Caco-2 (cell line): ENCODE measurements at regions of chr18 and their contacts with region 1.

Region 1: DNA sequence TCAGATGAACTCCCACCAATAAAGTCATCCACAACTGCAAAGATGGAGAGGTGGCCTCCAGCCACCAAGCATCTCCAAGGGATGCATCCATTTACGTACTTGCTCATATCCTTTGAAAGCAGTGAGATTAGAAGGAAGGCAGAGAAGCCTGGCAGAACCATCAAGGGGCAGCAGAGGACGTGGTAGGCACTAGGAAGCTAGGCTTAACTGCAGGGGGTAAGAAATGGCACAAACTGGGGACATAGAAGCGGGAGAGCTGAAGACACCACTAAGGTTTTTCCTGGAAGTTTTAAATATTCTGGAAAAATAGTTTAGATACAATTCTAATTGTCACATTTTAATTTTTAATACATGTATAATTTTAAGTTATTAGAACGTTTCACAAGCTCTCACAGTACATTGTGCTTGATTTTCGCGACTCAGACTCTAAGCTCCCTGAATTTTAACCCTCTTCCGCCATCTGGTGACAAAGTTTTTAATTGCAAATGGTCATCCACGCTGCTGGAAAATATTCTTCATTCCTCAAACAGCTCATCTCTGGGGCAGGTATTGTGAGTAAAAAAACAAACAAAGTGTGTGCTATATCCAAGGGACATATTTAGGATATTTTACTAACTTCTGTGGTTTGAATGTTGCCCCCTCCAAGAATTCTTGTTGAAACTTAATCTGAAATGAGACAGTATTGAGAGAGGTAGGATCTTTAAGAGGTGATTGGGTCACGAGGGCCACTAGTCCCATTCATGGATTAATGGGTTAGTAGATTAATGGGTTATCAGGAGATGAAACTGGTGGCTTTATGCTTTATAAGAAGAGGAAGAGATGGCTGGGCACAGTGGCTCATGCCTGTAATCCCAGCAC is 1.6 kb upstream of the PSTPIP2 start:
- DNase-seq: peak in 1 of 2 experiments; percentile 72
- H3K4me3 ChIP-seq: no peak overlapping the region
- H3K4me3 Mint-ChIP-seq: no peak overlapping the region
- H3K27ac Mint-ChIP-seq: peak overlapping the region; percentile 73
- H3K4me1 ChIP-seq: 0 out of 2 replicates have a peak, but pooled peaks cover 3% of the 10 kb centered on the region
- H3K4me1 Mint-ChIP-seq: peaks cover 8% of the 10 kb centered on the region
- H3K27me3 ChIP-seq: no peaks in the 10 kb centered on the region
- H3K27me3 Mint-ChIP-seq: no peaks in the 10 kb centered on the region
- CTCF ChIP-seq: peak in 1 of 2 experiments; percentile 17

Region 2: GRCh38 chr18:45664824-45665763 is 408.6 kb before region 1 on chr18:
- CTCF ChIA-PET with region 1: no interaction called
- POLR2A ChIA-PET with region 1: no interaction called
- intact Hi-C with region 1: loop called (anchors 5 kb)
- DNase-seq: peak in 1 of 2 experiments; percentile 49
- H3K4me3 ChIP-seq: no peak overlapping the region
- H3K4me3 Mint-ChIP-seq: no peak overlapping the region
- H3K27ac Mint-ChIP-seq: no peak overlapping the region
- H3K4me1 ChIP-seq: no peaks in the 10 kb centered on the region
- H3K4me1 Mint-ChIP-seq: peaks cover 6% of the 10 kb centered on the region
- H3K27me3 ChIP-seq: no peaks in the 10 kb centered on the region
- H3K27me3 Mint-ChIP-seq: no peaks in the 10 kb centered on the region
- CTCF ChIP-seq: peak; percentile 61 to 63

Region 3: GRCh38 chr18:45890606-45891005 is 183.1 kb before region 1 on chr18:
- CTCF ChIA-PET with region 1: no interaction called
- POLR2A ChIA-PET with region 1: no interaction called
- intact Hi-C with region 1: no loop called
- DNase-seq: no peak
- H3K4me3 ChIP-seq: no peak overlapping the region
- H3K4me3 Mint-ChIP-seq: no peak overlapping the region
- H3K27ac Mint-ChIP-seq: no peak overlapping the region
- H3K4me1 ChIP-seq: no peaks in the 10 kb centered on the region
- H3K4me1 Mint-ChIP-seq: no peaks in the 10 kb centered on the region
- H3K27me3 ChIP-seq: no peaks in the 10 kb centered on the region
- H3K27me3 Mint-ChIP-seq: no peaks in the 10 kb centered on the region
- CTCF ChIP-seq: no peak

Region 4: GRCh38 chr18:45920367-45920766 is 153.3 kb before region 1 on chr18:
- CTCF ChIA-PET with region 1: interaction called, 11 read pairs
- POLR2A ChIA-PET with region 1: no interaction called
- intact Hi-C with region 1: loop called (anchors 5 kb)
- DNase-seq: no peak
- H3K4me3 ChIP-seq: no peak overlapping the region
- H3K4me3 Mint-ChIP-seq: no peak overlapping the region
- H3K27ac Mint-ChIP-seq: no peak overlapping the region
- H3K4me1 ChIP-seq: no peaks in the 10 kb centered on the region
- H3K4me1 Mint-ChIP-seq: no peaks in the 10 kb centered on the region
- H3K27me3 ChIP-seq: no peaks in the 10 kb centered on the region
- H3K27me3 Mint-ChIP-seq: no peaks in the 10 kb centered on the region
- CTCF ChIP-seq: no peak

Region 5: GRCh38 chr18:45926085-45926484 is 147.6 kb before region 1 on chr18:
- CTCF ChIA-PET with region 1: interaction called, 11 read pairs
- POLR2A ChIA-PET with region 1: no interaction called
- intact Hi-C with region 1: loop called (anchors 5 kb)
- DNase-seq: no peak
- H3K4me3 ChIP-seq: no peak overlapping the region
- H3K4me3 Mint-ChIP-seq: no peak overlapping the region
- H3K27ac Mint-ChIP-seq: no peak overlapping the region
- H3K4me1 ChIP-seq: no peaks in the 10 kb centered on the region
- H3K4me1 Mint-ChIP-seq: no peaks in the 10 kb centered on the region
- H3K27me3 ChIP-seq: no peaks in the 10 kb centered on the region
- H3K27me3 Mint-ChIP-seq: no peaks in the 10 kb centered on the region
- CTCF ChIP-seq: no peak

Region 6: GRCh38 chr18:45967007-45967706 is 106.5 kb before region 1 on chr18 and contains the start of gene EPG5:
- CTCF ChIA-PET with region 1: no interaction called
- POLR2A ChIA-PET with region 1: no interaction called
- intact Hi-C with region 1: loop called (anchors 1 kb)
- DNase-seq: peak; percentile 93 to 94
- H3K4me3 ChIP-seq: peak within 1 kb of the TSS; percentile 69
- H3K4me3 Mint-ChIP-seq: peak within 1 kb of the TSS; percentile 99
- H3K27ac Mint-ChIP-seq: peak within 1 kb of the TSS; percentile 92
- H3K4me1 ChIP-seq: no peaks in the 10 kb centered on the region
- H3K4me1 Mint-ChIP-seq: no peaks in the 10 kb centered on the region
- H3K27me3 ChIP-seq: no peaks in the 10 kb centered on the region
- H3K27me3 Mint-ChIP-seq: no peaks in the 10 kb centered on the region
- CTCF ChIP-seq: no peak
- total RNA-seq, gene EPG5: 10.6 and 12.0 TPM in 2 replicates

Region 7: GRCh38 chr18:45980229-45980628 is 93.5 kb before region 1 on chr18:
- CTCF ChIA-PET with region 1: no interaction called
- POLR2A ChIA-PET with region 1: no interaction called
- intact Hi-C with region 1: loop called (anchors 2 kb)
- DNase-seq: peak; percentile 41 to 54
- H3K4me3 ChIP-seq: no peak overlapping the region
- H3K4me3 Mint-ChIP-seq: no peak overlapping the region
- H3K27ac Mint-ChIP-seq: no peak overlapping the region
- H3K4me1 ChIP-seq: peaks cover 14% of the 10 kb centered on the region
- H3K4me1 Mint-ChIP-seq: no peaks in the 10 kb centered on the region
- H3K27me3 ChIP-seq: no peaks in the 10 kb centered on the region
- H3K27me3 Mint-ChIP-seq: no peaks in the 10 kb centered on the region
- CTCF ChIP-seq: no peak

Region 8: GRCh38 chr18:46051731-46052461 is 21.8 kb before region 1 on chr18:
- CTCF ChIA-PET with region 1: no interaction called
- POLR2A ChIA-PET with region 1: interaction called, 3 read pairs
- intact Hi-C with region 1: loop called (anchors 1 kb)
- DNase-seq: peak; percentile 64 to 72
- H3K4me3 ChIP-seq: no peak overlapping the region
- H3K4me3 Mint-ChIP-seq: peak overlapping the region; percentile 27
- H3K27ac Mint-ChIP-seq: no peak overlapping the region
- H3K4me1 ChIP-seq: peaks cover 16% of the 10 kb centered on the region
- H3K4me1 Mint-ChIP-seq: peaks cover 18% of the 10 kb centered on the region
- H3K27me3 ChIP-seq: no peaks in the 10 kb centered on the region
- H3K27me3 Mint-ChIP-seq: no peaks in the 10 kb centered on the region
- CTCF ChIP-seq: no peak

Region 9: GRCh38 chr18:46226461-46226860 is 152.8 kb after region 1 on chr18:
- CTCF ChIA-PET with region 1: no interaction called
- POLR2A ChIA-PET with region 1: no interaction called
- intact Hi-C with region 1: no loop called
- DNase-seq: no peak
- H3K4me3 ChIP-seq: no peak overlapping the region
- H3K4me3 Mint-ChIP-seq: no peak overlapping the region
- H3K27ac Mint-ChIP-seq: no peak overlapping the region
- H3K4me1 ChIP-seq: no peaks in the 10 kb centered on the region
- H3K4me1 Mint-ChIP-seq: no peaks in the 10 kb centered on the region
- H3K27me3 ChIP-seq: no peaks in the 10 kb centered on the region
- H3K27me3 Mint-ChIP-seq: no peaks in the 10 kb centered on the region
- CTCF ChIP-seq: no peak